IMR-90 (cell line): ENCODE measurements at regions of chr1 and their contacts with region 1.

Region 1: DNA sequence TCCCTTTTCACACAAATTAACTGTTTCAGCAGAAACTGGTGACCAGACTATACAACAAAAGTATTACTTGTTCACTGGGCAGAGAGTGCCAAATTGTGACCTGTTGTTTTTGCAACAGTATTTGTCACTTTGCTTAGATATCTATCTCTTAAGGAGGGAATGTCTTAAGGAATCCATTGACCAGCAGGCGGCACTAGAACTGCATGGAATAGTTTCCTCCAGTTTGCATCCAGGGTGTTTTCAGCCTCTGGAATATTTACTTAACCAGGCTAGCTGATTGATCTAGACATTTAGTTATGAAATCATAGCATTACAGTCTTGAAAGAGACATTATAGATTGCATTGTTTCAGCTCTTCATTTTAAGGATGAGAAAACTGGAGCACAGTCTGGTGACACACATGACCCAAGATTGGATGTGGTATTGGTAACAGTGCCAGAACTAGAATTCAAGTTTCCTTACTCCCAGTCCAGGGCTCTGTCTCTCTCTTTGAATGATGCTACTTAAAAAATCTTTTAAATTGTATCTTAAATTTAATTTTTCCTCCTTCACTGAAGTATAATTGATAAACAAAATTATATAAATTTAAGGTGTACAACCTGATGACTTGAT is 16.9 kb downstream of the RPTN start:
- DNase-seq: peak; percentile 54
- ATAC-seq: peak; percentile 86
- H3K4me3 ChIP-seq: no peak overlapping the region
- H3K27ac ChIP-seq: no peak overlapping the region
- H3K4me1 ChIP-seq: no peaks in the 10 kb centered on the region
- H3K27me3 ChIP-seq: no peaks in the 10 kb centered on the region
- CTCF ChIP-seq: peak; percentile 75
- POLR2A ChIP-seq: no peak
- RAD21 ChIP-seq: peak; percentile 78

Region 2: GRCh38 chr1:152347116-152347728 is 205.1 kb after region 1 on chr1:
- CTCF ChIA-PET with region 1: no interaction called
- POLR2A ChIA-PET with region 1: no interaction called
- dilution Hi-C with region 1: no loop called
- in situ Hi-C with region 1: no loop called
- intact Hi-C with region 1: loop called (anchors 5 kb)
- DNase-seq: peak; percentile 52
- ATAC-seq: peak; percentile 75; the same call in 1 of the 2 replicates
- H3K4me3 ChIP-seq: no peak overlapping the region
- H3K27ac ChIP-seq: no peak overlapping the region
- H3K4me1 ChIP-seq: no peaks in the 10 kb centered on the region
- H3K27me3 ChIP-seq: no peaks in the 10 kb centered on the region
- CTCF ChIP-seq: peak; percentile 62
- POLR2A ChIP-seq: no peak
- RAD21 ChIP-seq: peak; percentile 31

Region 3: GRCh38 chr1:152440635-152441471 is 298.8 kb after region 1 on chr1:
- CTCF ChIA-PET with region 1: no interaction called
- POLR2A ChIA-PET with region 1: no interaction called
- dilution Hi-C with region 1: no loop called
- in situ Hi-C with region 1: no loop called
- intact Hi-C with region 1: loop called (anchors 2 kb)
- DNase-seq: peak; percentile 54
- ATAC-seq: peak; percentile 99
- H3K4me3 ChIP-seq: no peak overlapping the region
- H3K27ac ChIP-seq: no peak overlapping the region
- H3K4me1 ChIP-seq: no peaks in the 10 kb centered on the region
- H3K27me3 ChIP-seq: no peaks in the 10 kb centered on the region
- CTCF ChIP-seq: peak; percentile 78
- POLR2A ChIP-seq: no peak
- RAD21 ChIP-seq: peak; percentile 65

Region 4: DNA sequence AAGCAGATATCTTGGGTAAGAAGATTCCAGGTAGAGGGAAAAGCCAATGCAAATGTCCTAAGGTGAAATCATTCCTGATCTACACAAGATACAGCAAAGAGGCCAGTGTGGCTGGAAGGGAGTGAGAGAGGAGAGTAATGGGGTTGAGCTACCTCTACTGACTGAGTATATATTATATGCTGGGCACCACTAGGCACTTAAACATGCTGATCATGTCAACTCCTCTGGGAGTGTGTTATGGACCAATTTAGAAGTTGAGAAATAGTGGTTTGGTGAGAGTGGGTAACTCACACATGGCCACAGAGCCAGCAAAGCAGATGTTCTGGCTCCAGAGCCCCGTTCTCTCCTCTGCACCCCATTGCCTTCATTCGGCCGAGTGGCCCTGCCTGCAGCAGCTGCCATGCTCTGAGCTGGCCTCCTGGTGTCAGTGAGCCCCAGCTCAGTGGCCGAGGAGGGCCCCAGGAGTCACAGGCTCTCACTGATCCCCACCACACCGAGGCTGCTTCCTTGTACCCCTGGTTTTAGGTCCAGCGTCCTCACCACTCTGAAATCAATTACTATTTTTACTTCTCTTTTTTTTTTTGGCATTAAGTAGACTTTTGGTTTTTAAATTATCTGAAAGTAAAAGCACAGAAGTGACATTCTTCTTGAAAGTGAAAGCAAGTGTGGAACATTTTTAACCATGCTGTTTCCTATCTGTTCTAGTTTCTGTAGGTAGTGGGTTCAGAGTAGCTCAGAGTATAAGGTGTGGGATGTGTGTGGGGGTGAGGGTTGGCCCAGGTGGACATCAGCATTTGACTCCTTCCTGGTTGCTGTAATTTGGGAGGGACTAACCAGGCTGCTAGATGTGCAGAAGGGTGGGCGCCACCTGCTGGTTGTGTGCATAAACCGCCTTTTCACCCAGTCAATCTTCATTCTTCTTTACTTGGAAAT is 317.8 kb after region 1 on chr1:
- CTCF ChIA-PET with region 1: no interaction called
- POLR2A ChIA-PET with region 1: no interaction called
- dilution Hi-C with region 1: no loop called
- in situ Hi-C with region 1: no loop called
- intact Hi-C with region 1: loop called (anchors 2 kb)
- DNase-seq: peak; percentile 52
- ATAC-seq: peak; percentile 76
- H3K4me3 ChIP-seq: no peak overlapping the region
- H3K27ac ChIP-seq: no peak overlapping the region
- H3K4me1 ChIP-seq: no peaks in the 10 kb centered on the region
- H3K27me3 ChIP-seq: no peaks in the 10 kb centered on the region
- CTCF ChIP-seq: peak; percentile 70
- POLR2A ChIP-seq: no peak
- RAD21 ChIP-seq: peak; percentile 19; the same call in 1 of the 2 replicates